Spleen (tissue), 13 donors: ENCODE measurements at regions of chr10 and their contacts with region 1.

Region 1: DNA sequence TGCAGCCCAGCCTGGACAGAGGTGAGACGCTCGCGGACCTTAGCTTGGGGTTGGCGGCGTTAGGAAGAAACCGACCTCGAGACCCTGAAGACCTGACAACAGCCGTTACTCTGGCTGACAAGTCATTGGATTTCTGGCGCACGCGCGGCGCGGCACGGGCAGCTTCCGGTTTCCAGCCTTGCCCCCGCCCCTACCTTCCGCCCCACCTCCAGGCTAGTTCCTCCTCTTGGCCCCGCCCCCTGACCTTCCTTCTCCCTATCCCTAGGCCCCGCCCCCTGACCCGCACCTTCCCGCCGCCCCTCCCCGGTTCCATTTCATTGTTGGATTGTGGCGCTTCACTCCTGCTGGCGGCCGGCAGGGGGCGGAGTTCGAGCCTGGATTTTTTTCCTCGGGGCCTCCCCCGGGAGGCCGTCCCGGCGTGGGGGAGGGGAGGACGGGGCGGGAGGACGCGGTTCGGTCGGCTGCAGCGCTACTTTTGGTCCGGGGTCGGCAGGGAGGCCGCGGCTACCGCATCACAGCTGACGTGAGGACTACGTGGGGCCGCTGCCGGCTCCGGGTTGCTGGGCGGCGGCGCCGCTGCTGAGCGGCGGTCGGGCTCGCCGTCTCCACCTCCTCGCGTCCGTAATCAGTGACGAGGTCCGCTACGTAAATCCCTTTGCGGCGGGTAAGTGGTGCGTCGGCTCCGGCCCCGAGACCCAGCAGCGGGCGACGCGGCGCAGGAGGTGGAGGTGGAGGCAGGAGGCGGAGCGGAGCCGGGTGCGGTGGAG is at the start of gene CREM:
- DNase-seq: peak; percentile 99
- H3K4me3 ChIP-seq: peak within 1 kb of the TSS; percentile 46 to 77 (median 53)
- H3K27ac ChIP-seq: peak within 1 kb of the TSS; percentile 96 to 100 (median 100)
- H3K4me1 ChIP-seq: peaks cover 0 to 51% (median 43%) of the 10 kb centered on the region in 6 donors
- H3K27me3 ChIP-seq: no peaks in the 10 kb centered on the region
- CTCF ChIP-seq: peak; percentile 90 to 99 (median 98)
- POLR2A ChIP-seq: peak; percentile 97 to 99 (median 98)
- total RNA-seq, gene CREM: 36.4 to 65.4 (median 44.1) TPM

Region 2: GRCh38 chr10:35218339-35218955 is 91.7 kb after region 1 on chr10:
- intact Hi-C with region 1: loop called (anchors 2 kb)
- DNase-seq: peak; percentile 90
- H3K4me3 ChIP-seq: no peak overlapping the region
- H3K27ac ChIP-seq: peak overlapping the region; percentile 48 to 81 (median 71)
- H3K4me1 ChIP-seq: peaks cover 13 to 38% (median 27%) of the 10 kb centered on the region in 6 donors
- H3K27me3 ChIP-seq: no peaks in the 10 kb centered on the region
- CTCF ChIP-seq: peak; percentile 54 to 93 (median 80)
- POLR2A ChIP-seq: no peak